ENCODE measurements at regions of chr5 and their contacts with region 1.

Region 1: DNA sequence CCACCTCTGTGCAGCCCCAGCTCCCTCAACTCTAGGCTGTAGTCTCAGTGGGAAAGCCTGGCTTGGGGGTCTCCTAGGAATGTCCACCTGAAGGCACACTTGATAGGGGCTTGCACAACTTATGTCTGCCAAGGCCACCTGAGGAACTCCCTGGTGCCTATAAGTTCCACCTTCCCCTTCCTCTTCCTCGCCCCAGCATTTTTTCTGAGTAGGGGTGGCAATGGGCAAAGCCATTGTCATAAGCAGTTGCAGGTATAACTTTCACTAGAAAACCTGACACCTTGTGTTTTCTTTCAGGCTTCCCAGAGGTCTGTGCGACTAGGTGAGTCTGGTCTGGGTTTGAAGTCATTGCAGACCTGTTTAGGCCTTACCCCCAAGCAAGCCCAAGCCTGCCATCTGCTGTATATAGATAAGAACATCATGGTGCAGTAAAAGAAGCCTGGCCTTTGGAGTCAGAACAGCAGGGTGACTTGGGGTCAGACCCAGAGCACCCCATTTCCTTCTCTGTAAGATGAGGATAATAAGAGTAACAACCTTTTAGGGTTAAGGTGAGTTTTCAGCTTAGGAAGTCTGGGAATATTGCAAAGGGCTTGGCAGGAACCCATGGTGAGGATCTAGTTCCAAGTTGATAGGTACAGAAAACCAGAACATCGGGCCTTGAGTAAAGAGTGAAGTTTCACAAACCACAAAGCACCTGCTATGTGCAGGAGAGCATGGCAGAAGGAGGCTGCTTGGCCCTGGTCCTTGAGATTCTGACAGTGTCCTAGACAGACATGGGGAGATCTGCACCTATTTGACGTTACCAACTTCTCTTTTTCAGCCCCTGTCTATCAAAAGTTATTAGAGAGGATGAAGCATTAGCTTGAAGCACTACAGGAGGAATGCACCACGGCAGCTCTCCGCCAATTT is 33.8 kb downstream of the TGFBI start:
- DNase-seq: no peak
- ATAC-seq: no peak

Region 2: GRCh38 chr5:135977375-135977928 is 85.2 kb before region 1 on chr5:
- intact Hi-C with region 1: loop called in 1 of 2 experiments (anchors 10 kb)
- DNase-seq: peak; percentile 78
- ATAC-seq: peak; percentile 91 to 94

Region 3: DNA sequence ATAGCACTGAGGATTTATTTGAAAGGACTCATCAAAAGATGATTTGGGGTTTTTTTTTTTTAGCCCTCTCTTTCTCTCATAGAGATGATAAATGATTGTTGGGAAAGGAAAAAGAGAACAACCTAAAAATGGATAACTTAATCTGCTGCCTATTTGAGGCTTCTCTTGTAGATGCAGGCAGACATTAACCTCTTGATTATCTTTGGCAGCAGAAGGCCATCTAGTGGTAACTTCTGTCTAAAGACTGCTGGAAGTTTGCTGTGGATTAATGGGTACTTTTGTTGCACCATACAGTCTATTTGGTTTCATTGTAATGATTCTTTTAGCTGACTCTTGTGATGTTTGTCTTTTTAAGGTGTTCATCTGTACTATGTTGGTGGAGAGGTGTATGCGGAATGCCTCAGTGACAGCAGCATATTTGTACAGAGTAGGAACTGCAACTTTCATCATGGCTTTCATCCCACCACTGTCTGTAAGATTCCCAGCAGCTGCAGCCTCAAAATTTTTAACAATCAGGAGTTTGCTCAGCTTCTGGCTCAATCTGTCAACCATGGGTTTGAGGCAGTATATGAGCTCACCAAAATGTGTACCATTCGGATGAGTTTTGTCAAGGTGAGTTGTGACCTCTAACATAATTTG is 111.5 kb after region 1 on chr5:
- intact Hi-C with region 1: loop called in 1 of 2 experiments (anchors 10 kb)
- DNase-seq: no peak
- ATAC-seq: peak in 1 of 2 donors; percentile 52

Region 4: DNA sequence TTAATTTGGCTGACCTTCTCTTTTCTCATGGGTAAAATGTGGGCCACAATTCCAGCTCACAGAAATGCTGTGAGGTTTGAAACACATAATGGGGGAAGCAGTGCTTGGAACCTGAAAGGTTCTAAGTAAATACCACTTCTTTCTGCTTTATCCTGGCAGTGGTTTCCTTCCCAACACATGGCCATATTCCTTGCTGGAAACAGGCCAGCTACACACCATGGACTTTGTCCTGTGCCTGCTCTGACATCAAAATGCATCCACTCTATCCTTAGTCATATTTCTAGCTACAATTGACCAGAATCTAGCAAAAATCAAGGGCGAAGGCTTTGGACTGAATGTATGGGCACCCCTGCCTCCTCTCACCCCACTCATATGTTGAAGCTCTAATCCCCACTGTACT is 395.9 kb after region 1 on chr5:
- intact Hi-C with region 1: no loop called
- DNase-seq: no peak
- ATAC-seq: no peak